Activated CD8-positive, alpha-beta memory T cell treated with anti-CD3 and anti-CD28 coated beads, Interleukin-2, amount 10 ng/mL, durations not matched to agents 7 days and 5 days (primary cell): ENCODE measurements at regions of chr14 and their contacts with region 1.

Region 1: DNA sequence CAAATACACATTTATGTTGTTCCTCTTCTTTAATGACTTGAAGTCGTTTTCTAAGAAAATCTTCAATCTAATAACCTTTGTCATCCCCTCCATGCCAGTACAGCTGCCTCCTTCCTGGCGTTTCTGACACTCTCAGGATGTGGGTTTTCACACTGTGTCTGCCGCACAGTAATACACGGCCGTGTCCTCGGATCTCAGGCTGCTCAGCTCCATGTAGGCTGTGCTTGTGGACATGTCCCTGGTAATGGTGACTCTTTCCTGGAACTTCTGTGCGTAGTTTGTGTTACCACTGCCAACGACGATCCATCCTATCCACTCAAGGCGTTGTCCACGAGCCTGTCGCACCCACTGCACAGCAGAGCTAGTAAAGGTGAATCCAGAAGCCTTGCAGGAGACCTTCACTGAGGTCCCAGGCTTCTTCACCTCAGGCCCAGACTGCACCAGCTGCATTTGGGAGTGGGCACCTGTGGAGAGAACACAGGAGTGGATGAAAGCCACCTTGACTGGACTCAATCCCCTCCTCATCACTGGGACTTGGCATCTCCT is 1095.9 kb downstream of the TMEM121 start:
- DNase-seq: peak; percentile 80
- ATAC-seq: peak; percentile 54
- H3K4me3 Mint-ChIP-seq: no peak overlapping the region
- H3K27ac Mint-ChIP-seq: no peak overlapping the region
- H3K4me1 Mint-ChIP-seq: peaks cover 29% of the 10 kb centered on the region
- H3K27me3 Mint-ChIP-seq: peaks cover 61% of the 10 kb centered on the region

Region 2: GRCh38 chr14:106551263-106551662 is 71.0 kb before region 1 on chr14:
- CTCF ChIA-PET with region 1: no interaction called
- DNase-seq: no peak
- ATAC-seq: no peak
- H3K4me3 Mint-ChIP-seq: no peak overlapping the region
- H3K27ac Mint-ChIP-seq: no peak overlapping the region
- H3K4me1 Mint-ChIP-seq: peaks cover 25% of the 10 kb centered on the region
- H3K27me3 Mint-ChIP-seq: peaks cover 12% of the 10 kb centered on the region

Region 3: GRCh38 chr14:106586098-106586704 is 36.1 kb before region 1 on chr14:
- CTCF ChIA-PET with region 1: interaction called, 13 read pairs
- DNase-seq: peak; percentile 73
- ATAC-seq: peak; percentile 83
- H3K4me3 Mint-ChIP-seq: no peak overlapping the region
- H3K27ac Mint-ChIP-seq: no peak overlapping the region
- H3K4me1 Mint-ChIP-seq: peaks cover 2% of the 10 kb centered on the region
- H3K27me3 Mint-ChIP-seq: peaks cover 46% of the 10 kb centered on the region

Region 4: GRCh38 chr14:106599209-106599608 is 23.1 kb before region 1 on chr14:
- CTCF ChIA-PET with region 1: interaction called, 20 read pairs
- DNase-seq: no peak
- ATAC-seq: no peak
- H3K4me3 Mint-ChIP-seq: no peak overlapping the region
- H3K27ac Mint-ChIP-seq: no peak overlapping the region
- H3K4me1 Mint-ChIP-seq: no peaks in the 10 kb centered on the region
- H3K27me3 Mint-ChIP-seq: peaks cover 88% of the 10 kb centered on the region

Region 5: GRCh38 chr14:106605548-106606448 is 16.5 kb before region 1 on chr14:
- CTCF ChIA-PET with region 1: interaction called, 35 read pairs
- DNase-seq: peak; percentile 87
- ATAC-seq: peak; percentile 98
- H3K4me3 Mint-ChIP-seq: no peak overlapping the region
- H3K27ac Mint-ChIP-seq: no peak overlapping the region
- H3K4me1 Mint-ChIP-seq: peaks cover 5% of the 10 kb centered on the region
- H3K27me3 Mint-ChIP-seq: peaks cover 83% of the 10 kb centered on the region

Region 6: DNA sequence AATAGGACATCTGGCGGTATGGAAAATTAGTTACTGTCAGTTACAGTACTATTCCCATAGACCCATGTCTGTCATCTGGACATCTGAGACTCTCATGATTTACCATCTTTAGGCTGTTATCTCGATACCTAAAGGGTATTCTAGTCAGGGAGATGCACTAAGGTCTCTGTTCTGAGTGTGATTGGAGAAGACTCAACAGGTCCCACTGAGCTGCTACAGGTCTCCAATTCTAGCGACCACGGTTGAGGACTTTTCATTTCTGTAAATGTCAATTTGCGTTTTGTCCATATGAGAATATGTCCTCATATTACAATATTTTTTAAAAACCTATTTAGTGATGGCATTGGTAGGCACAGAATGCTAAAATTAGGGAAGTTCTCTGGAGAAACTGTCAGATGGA is 64.3 kb after region 1 on chr14:
- CTCF ChIA-PET with region 1: no interaction called
- DNase-seq: no peak
- ATAC-seq: no peak
- H3K4me3 Mint-ChIP-seq: no peak overlapping the region
- H3K27ac Mint-ChIP-seq: no peak overlapping the region
- H3K4me1 Mint-ChIP-seq: peaks cover 11% of the 10 kb centered on the region
- H3K27me3 Mint-ChIP-seq: peaks cover 56% of the 10 kb centered on the region

Region 7: DNA sequence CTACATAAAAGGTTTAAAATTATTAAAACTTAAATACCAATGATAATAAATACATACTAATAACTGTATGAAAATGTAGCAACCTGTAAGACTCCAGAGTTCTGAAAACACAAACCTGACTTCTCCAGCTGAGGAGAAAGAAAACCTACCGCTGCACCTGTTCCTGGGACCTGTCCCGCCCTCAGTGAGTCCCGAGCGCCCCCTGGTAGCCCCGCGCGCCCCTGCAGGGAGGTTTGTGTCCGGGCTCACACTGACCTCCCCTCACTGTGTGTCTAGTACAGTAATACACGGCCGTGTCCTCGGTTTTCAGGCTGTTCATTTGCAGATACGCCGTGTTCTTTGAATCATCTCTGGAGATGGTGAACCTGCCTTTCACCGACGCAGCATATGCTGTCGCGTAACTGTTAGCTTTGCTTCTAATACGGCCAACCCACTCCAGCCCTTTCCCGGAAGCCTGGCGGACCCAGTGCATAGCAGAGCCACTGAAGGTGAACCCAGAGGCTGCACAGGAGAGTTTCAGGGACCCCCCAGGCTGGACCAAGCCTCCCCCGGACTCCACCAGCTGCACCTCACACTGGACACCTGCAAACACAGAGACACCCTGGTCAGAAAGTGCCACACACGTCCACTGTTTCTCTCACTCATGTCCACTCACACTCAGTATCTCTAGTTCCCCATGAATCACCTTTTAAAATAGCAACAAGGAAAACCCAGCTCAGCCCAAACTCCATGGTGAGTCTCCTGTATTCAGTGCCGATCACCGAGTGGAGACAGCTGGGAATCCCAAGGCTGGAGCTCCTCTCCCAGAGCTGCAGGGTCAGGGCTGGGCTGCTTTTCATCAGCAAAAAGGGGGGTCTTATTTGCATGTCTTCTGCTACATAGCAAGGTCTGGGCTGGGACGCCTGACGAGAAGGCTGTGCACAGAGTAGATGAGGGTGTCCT is 180.4 kb after region 1 on chr14:
- CTCF ChIA-PET with region 1: no interaction called
- DNase-seq: no peak
- ATAC-seq: no peak
- H3K4me3 Mint-ChIP-seq: no peak overlapping the region
- H3K27ac Mint-ChIP-seq: no peak overlapping the region
- H3K4me1 Mint-ChIP-seq: no peaks in the 10 kb centered on the region
- H3K27me3 Mint-ChIP-seq: peaks cover 78% of the 10 kb centered on the region